Sigmoid colon (tissue), 7 donors: ENCODE measurements at regions of chr1 and their contacts with region 1.

Region 1: DNA sequence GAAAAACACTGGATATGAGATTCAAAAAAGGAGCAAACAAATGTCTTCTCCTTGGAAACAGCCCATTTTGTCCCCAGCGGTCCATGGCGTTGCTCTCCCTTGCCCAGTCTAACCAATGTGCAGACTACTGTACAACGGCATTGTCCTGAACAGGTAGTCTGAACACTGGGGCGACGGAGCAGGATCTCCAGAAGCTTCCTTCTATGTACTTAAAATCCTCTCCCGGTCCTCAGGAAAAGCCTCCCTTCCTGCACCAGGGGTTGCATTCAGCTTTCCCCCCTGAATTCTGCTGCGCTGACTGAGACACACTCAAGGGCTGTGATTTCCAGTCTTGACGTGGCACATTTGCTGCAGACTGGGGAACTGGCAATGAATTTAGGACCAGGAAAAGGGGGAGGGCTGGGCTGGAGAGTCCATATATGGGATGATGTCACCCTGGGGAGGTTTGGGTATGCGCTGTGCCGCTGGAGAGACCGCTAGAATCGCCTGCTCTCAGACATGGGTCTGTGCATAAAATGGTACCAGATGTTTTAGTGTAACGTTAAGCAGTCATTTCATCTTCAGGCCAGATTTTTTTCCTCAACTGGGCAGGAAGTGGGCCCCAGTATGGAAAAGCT is 275.9 kb upstream of the C1orf105 start:
- DNase-seq: peak; percentile 96
- H3K4me3 ChIP-seq: peak overlapping the region; percentile 45 to 62 (median 58)
- H3K27ac ChIP-seq: peak overlapping the region; percentile 80 to 92 (median 88)
- H3K4me1 ChIP-seq: peaks cover 0 to 33% (median 11%) of the 10 kb centered on the region in 4 donors
- H3K27me3 ChIP-seq: no peaks in the 10 kb centered on the region
- CTCF ChIP-seq: no peak
- EP300 ChIP-seq: peak in 2 of 4 donors; percentile 7 to 66
- POLR2A ChIP-seq: peak; percentile 67 to 73

Region 2: GRCh38 chr1:172180501-172181285 is 36.1 kb after region 1 on chr1:
- intact Hi-C with region 1: loop called (anchors 2 kb)
- DNase-seq: peak; percentile 78
- H3K4me3 ChIP-seq: peak overlapping the region in 3 of 4 donors; percentile 10 to 32 (median 28)
- H3K27ac ChIP-seq: peak overlapping the region; percentile 75 to 87 (median 82)
- H3K4me1 ChIP-seq: peaks cover 0 to 54% (median 40%) of the 10 kb centered on the region in 4 donors
- H3K27me3 ChIP-seq: no peaks in the 10 kb centered on the region
- CTCF ChIP-seq: no peak
- EP300 ChIP-seq: no peak
- POLR2A ChIP-seq: no peak

Region 3: GRCh38 chr1:172286629-172287076 is 142.1 kb after region 1 on chr1:
- intact Hi-C with region 1: loop called (anchors 10 kb)
- DNase-seq: peak; percentile 75
- H3K4me3 ChIP-seq: no peak overlapping the region
- H3K27ac ChIP-seq: peak overlapping the region; percentile 31 to 64 (median 50)
- H3K4me1 ChIP-seq: peaks cover 0 to 28% (median 18%) of the 10 kb centered on the region in 4 donors
- H3K27me3 ChIP-seq: no peaks in the 10 kb centered on the region
- CTCF ChIP-seq: no peak
- EP300 ChIP-seq: no peak
- POLR2A ChIP-seq: no peak

Region 4: GRCh38 chr1:172357753-172358385 is 213.3 kb after region 1 on chr1:
- intact Hi-C with region 1: loop called (anchors 2 kb)
- DNase-seq: no peak
- H3K4me3 ChIP-seq: peak overlapping the region in 3 of 4 donors; percentile 14 to 19 (median 18)
- H3K27ac ChIP-seq: peak overlapping the region; percentile 77 to 84 (median 80)
- H3K4me1 ChIP-seq: peaks cover 0 to 70% (median 54%) of the 10 kb centered on the region in 4 donors
- H3K27me3 ChIP-seq: no peaks in the 10 kb centered on the region
- CTCF ChIP-seq: no peak
- EP300 ChIP-seq: peak in 1 of 4 donors; percentile 10
- POLR2A ChIP-seq: no peak

Region 5: GRCh38 chr1:172532700-172533509 is 388.4 kb after region 1 on chr1 and contains the start of gene SUCO:
- intact Hi-C with region 1: loop called (anchors 10 kb)
- DNase-seq: peak; percentile 100
- H3K4me3 ChIP-seq: peak within 1 kb of the TSS; percentile 82 to 94 (median 89)
- H3K27ac ChIP-seq: peak within 1 kb of the TSS; percentile 96 to 99 (median 98)
- H3K4me1 ChIP-seq: peaks cover 0 to 42% (median 23%) of the 10 kb centered on the region in 4 donors
- H3K27me3 ChIP-seq: no peaks in the 10 kb centered on the region
- CTCF ChIP-seq: no peak
- EP300 ChIP-seq: peak in 1 of 4 donors; percentile 34
- POLR2A ChIP-seq: peak; percentile 86 to 93
- total RNA-seq, gene SUCO: 27.4 to 36.6 (median 33.4) TPM